Activated B cell treated with CpG ODN at 0.5 μM for 24 hours (primary cell): ENCODE measurements at regions of chr12 and their contacts with region 1.

Region 1: DNA sequence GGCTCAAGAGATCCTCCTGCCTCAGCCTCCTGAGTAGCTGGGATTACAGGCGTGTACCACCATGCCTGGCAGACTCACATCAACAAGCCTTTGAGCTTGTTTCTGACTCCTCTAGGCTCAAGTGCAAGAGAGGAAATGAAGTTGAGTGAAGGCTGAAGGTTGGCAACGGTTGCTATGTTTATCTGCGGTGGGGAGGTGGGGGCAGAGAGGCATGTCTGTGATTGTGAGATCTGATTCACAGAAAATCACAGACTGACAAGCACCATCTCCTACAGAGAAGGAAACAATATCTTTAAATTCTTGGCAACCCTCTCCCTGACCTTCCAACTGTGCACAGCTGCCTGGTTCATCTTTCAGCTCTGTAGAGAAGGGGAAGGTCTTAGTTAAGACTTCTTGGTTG is 22.1 kb upstream of the NINJ2 start:
- DNase-seq: peak; percentile 64
- ATAC-seq: peak; percentile 79
- H3K4me3 Mint-ChIP-seq: peak overlapping the region; percentile 62
- H3K27ac Mint-ChIP-seq: peak overlapping the region; percentile 99
- H3K4me1 Mint-ChIP-seq: peaks cover 50% of the 10 kb centered on the region
- H3K27me3 Mint-ChIP-seq: no peaks in the 10 kb centered on the region
- CTCF ChIP-seq: no peak

Region 2: GRCh38 chr12:718756-719102 is 33.3 kb after region 1 on chr12:
- CTCF ChIA-PET with region 1: no interaction called
- POLR2A ChIA-PET with region 1: interaction called, 6 read pairs
- intact Hi-C with region 1: loop called (anchors 1 kb)
- DNase-seq: no peak
- ATAC-seq: no peak
- H3K4me3 Mint-ChIP-seq: peak overlapping the region; percentile 44
- H3K27ac Mint-ChIP-seq: peak overlapping the region; percentile 94
- H3K4me1 Mint-ChIP-seq: peaks cover 43% of the 10 kb centered on the region
- H3K27me3 Mint-ChIP-seq: no peaks in the 10 kb centered on the region
- CTCF ChIP-seq: no peak

Region 3: GRCh38 chr12:1680804-1681492 is 995.6 kb after region 1 on chr12:
- CTCF ChIA-PET with region 1: no interaction called
- POLR2A ChIA-PET with region 1: no interaction called
- intact Hi-C with region 1: no loop called
- DNase-seq: no peak
- ATAC-seq: no peak
- H3K4me3 Mint-ChIP-seq: no peak overlapping the region
- H3K27ac Mint-ChIP-seq: no peak overlapping the region
- H3K4me1 Mint-ChIP-seq: no peaks in the 10 kb centered on the region
- H3K27me3 Mint-ChIP-seq: peaks cover 6% of the 10 kb centered on the region
- CTCF ChIP-seq: no peak